Heart left ventricle (tissue), 16 donors: ENCODE measurements at regions of chr17 and their contacts with region 1.

Region 1: GRCh38 chr17:10729334-10730193 is at the start of gene TMEM220:
- DNase-seq: peak; percentile 80 to 91 (median 89)
- ATAC-seq: peak; percentile 87 to 97 (median 96)
- H3K4me3 ChIP-seq: peak within 1 kb of the TSS; percentile 62 to 82 (median 76)
- H3K27ac ChIP-seq: peak within 1 kb of the TSS; percentile 86 to 99 (median 90)
- H3K4me1 ChIP-seq: peaks cover 0 to 11% (median 4%) of the 10 kb centered on the region in 12 donors
- H3K27me3 ChIP-seq: no peaks in the 10 kb centered on the region
- CTCF ChIP-seq: no peak
- POLR2A ChIP-seq: peak in 1 of 2 donors; percentile 53
- total RNA-seq, gene TMEM220: 3.8 to 13.9 (median 6.3) TPM

Region 2: DNA sequence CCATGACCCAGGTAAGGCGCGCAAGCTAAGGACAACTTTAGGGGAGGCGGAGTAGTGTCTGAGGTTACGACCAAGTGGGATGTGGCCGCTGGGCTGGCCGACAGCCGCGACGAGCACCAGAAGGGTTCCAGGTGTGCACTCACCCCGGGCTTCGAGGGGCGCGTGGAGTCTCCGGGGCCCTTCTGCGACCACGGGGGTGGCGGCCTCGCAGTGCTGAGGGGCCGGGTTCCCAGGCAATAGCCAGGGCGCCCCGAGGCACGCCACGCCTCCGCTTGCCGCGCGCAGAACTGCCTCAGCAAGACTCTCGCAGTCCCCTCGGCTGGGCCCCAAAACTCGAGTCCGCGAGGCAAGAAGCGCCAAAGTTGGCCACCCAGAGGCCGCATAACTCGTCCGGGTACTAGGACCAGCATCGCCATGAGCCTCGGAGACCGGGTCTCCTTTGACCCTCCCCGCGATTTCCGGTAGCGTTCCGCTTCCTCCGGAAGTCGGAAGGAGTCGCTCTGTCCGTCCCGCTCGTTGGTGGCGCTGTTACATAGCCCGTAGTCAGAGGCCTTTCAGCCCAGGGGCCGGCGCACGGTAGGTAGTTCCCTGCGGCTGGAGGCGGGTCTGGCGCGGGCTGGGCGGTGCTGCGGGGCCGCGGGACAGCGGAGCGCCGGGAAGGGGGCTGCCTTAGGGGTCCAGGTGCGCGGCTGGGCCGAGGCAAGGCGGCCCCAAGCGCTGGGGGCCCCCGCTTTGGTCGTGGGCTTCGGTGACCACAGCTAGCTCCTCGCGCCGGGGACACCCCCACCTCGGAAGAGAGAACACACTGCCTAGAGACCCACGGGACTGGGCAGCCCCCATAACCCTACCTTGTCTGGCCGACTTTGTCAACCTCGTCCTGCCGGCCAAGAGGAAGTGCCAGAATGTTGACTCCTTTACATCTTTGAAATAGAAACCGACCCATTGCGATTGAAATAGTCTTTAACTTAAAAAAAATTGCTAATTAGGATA is 32.2 kb before region 1 on chr17 and contains the starts of genes ADPRM and SCO1:
- intact Hi-C with region 1: loop called in 1 of 10 experiments (anchors 5 kb)
- DNase-seq: peak; percentile 93 to 96 (median 96)
- ATAC-seq: peak; percentile 99 to 100 (median 99)
- H3K4me3 ChIP-seq: peak within 1 kb of the TSS; percentile 68 to 99 (median 90)
- H3K27ac ChIP-seq: peak within 1 kb of the TSS; percentile 86 to 99 (median 93)
- H3K4me1 ChIP-seq: peaks cover 6 to 43% (median 17%) of the 10 kb centered on the region in 12 donors
- H3K27me3 ChIP-seq: no peaks in the 10 kb centered on the region
- CTCF ChIP-seq: peak in 11 of 12 donors; percentile 17 to 67 (median 38)
- POLR2A ChIP-seq: peak; percentile 49 to 90
- total RNA-seq, gene ADPRM: 2.1 to 7.2 (median 4.6) TPM
- total RNA-seq, gene SCO1: 27.7 to 42.9 (median 31.4) TPM